Activated T-helper 1 cell treated with anti-CD3 and anti-CD28 coated beads, Interleukin-12 subunit alpha, Interleukin-12 subunit beta, Interleukin-2, Interleukin-4 antibody, amounts not matched to agents 30 ng/mL and 10 ng/mL and 1 ng/mL, durations not matched to agents 14 hours and 24 hours and 36 hours (primary cell): ENCODE measurements at regions of chr3 and their contacts with region 1.

Region 1: GRCh38 chr3:59480486-59480995 is 430.7 kb upstream of the CFAP20DC start:
- DNase-seq: no peak
- H3K4me3 Mint-ChIP-seq: peak overlapping the region; percentile 52
- H3K27ac Mint-ChIP-seq: peak overlapping the region; percentile 72
- H3K4me1 Mint-ChIP-seq: peaks cover 41% of the 10 kb centered on the region
- H3K27me3 Mint-ChIP-seq: no peaks in the 10 kb centered on the region

Region 2: GRCh38 chr3:59444294-59444671 is 36.3 kb before region 1 on chr3:
- intact Hi-C with region 1: loop called (anchors 1 kb)
- DNase-seq: no peak
- H3K4me3 Mint-ChIP-seq: peak overlapping the region; percentile 74
- H3K27ac Mint-ChIP-seq: peak overlapping the region; percentile 94
- H3K4me1 Mint-ChIP-seq: peaks cover 61% of the 10 kb centered on the region
- H3K27me3 Mint-ChIP-seq: no peaks in the 10 kb centered on the region

Region 3: GRCh38 chr3:59456852-59457485 is 23.6 kb before region 1 on chr3:
- intact Hi-C with region 1: loop called (anchors 1 kb)
- DNase-seq: peak; percentile 42
- H3K4me3 Mint-ChIP-seq: peak overlapping the region; percentile 27
- H3K27ac Mint-ChIP-seq: peak overlapping the region; percentile 41
- H3K4me1 Mint-ChIP-seq: peaks cover 59% of the 10 kb centered on the region
- H3K27me3 Mint-ChIP-seq: peaks cover 4% of the 10 kb centered on the region

Region 4: DNA sequence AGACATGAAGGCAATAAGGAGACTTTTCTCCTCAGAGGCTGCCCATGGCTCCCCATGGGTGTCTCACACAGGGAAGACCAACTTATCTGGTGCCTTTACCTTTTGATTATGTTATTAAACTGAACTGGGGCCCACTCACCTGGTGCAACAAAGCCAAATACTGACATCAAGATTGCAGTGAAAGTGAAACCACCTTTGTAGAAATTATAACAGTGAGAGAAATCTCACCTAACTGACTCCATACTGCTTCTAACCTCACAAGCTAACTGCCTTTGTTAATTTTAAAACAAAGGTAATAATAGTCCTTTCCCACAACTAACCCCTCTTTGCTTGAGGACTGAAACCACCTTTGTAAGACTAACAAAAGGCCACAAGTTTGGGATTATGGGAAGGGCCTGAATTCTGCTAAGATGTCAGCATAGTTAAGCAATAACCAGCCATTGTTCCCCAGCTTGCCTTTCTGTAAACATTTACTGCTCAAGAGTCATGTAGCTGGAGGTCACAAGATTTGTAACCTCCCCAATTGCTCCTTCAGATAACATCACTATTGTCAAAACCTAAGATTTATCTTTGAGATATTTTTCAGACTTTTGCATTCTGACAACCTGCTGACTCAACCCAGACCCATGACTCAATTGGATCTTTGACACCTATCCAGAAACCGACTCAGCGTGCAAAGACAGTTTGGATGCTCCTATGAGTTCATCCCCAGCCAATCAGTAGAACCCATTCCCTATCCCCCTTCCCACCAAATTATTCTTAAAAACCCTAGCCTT is 10.4 kb before region 1 on chr3:
- intact Hi-C with region 1: loop called (anchors 1 kb)
- DNase-seq: no peak
- H3K4me3 Mint-ChIP-seq: no peak overlapping the region
- H3K27ac Mint-ChIP-seq: peak overlapping the region; percentile 64
- H3K4me1 Mint-ChIP-seq: peaks cover 38% of the 10 kb centered on the region
- H3K27me3 Mint-ChIP-seq: no peaks in the 10 kb centered on the region

Region 5: DNA sequence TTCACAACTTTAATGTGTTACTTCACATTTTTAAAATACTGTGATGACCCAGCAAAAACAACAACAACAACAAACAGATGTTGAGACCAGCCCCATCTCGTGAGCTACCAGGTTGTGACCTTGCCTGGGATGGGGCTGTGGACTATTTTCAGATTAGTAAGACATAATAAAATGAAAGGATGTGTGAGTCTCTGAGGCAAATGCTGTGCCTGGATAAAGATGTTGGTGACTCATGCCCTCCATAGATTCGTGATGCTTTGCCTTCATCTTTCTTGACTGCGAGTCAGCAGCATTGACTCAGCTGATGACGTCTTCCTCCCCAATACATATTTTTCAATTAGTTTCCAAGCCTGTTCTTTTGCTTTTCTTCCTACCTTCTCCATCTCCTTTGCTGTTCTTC is 22.3 kb after region 1 on chr3:
- intact Hi-C with region 1: loop called (anchors 1 kb)
- DNase-seq: no peak
- H3K4me3 Mint-ChIP-seq: no peak overlapping the region
- H3K27ac Mint-ChIP-seq: peak overlapping the region; percentile 21
- H3K4me1 Mint-ChIP-seq: peaks cover 16% of the 10 kb centered on the region
- H3K27me3 Mint-ChIP-seq: no peaks in the 10 kb centered on the region

Region 6: DNA sequence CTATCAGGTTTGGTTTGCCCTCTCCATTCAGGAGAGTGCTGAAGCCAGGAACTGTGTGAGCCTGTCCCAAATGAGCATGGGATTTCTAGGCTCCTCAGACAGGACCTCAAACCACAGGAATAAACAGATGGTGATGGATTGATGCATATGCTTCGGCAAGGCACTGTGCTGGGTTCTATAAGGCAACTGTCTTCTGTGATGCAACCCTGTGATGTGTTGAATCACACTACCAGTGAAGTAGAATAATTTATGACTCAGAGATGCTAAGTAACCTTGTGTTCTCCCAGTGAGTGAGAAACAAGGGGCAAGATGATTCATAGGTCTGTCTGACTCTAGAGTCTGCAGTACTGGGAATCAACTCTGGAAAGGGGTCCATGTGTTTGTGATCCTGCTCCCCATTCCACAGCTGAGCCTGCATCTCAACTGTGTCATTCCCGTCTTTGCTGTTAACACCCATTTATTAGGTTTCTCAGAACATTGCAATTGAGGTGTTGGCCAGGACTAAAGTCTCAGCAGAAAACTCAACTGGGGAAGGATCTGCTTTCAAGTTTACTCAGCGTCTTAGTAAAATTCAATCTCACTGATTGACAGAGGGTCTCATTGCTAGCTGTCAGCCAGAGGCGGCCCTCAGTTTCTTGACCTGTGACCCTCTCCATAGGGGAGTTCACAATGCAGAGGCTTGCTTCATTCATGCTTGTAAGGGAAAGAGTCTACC is 79.3 kb after region 1 on chr3:
- intact Hi-C with region 1: loop called (anchors 1 kb)
- DNase-seq: no peak
- H3K4me3 Mint-ChIP-seq: no peak overlapping the region
- H3K27ac Mint-ChIP-seq: peak overlapping the region; percentile 88
- H3K4me1 Mint-ChIP-seq: peaks cover 24% of the 10 kb centered on the region
- H3K27me3 Mint-ChIP-seq: no peaks in the 10 kb centered on the region

Region 7: GRCh38 chr3:59566481-59566975 is 86.0 kb after region 1 on chr3:
- intact Hi-C with region 1: loop called (anchors 1 kb)
- DNase-seq: no peak
- H3K4me3 Mint-ChIP-seq: no peak overlapping the region
- H3K27ac Mint-ChIP-seq: peak overlapping the region; percentile 36
- H3K4me1 Mint-ChIP-seq: peaks cover 12% of the 10 kb centered on the region
- H3K27me3 Mint-ChIP-seq: no peaks in the 10 kb centered on the region